ENCODE measurements at regions of chr20 and their contacts with region 1.

Region 1: DNA sequence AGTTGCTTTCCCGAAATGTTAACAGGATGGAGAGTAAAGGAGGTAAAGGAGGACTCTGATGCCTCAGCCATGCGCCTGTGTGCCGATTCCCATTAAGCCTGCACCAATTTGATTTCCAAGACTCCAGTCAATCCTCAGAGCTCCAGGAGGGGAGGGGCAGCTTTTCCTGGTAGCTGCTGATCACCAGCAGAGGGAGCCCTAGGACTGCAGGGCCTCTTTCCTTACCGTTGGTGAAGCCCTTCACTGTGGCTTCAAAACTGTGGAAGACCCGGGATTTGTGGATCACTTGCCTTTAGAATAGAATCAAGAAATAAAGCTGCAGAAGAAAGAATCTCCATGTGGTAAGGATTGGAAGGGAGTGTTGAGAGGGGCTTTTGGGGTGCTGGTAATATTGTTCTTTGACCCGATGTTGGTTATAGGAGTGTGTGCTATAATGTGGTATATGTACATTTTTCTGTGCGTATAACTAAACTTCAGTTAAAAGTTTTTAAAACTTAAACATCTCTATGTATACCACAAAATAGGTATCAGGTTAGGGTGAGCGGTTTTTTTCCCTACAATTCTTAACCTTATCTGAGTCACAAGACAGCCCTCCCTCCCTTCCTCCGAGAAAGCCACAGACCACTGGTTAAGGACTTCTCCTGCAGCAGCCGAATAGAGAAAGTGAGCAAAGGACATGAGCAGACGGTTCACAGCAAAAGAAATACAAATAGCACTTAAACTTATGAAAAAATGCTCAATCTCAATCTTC is 6.9 kb upstream of the OSER1 start:
- DNase-seq: peak; percentile 77
- ATAC-seq: peak; percentile 55
- H3K4me3 Mint-ChIP-seq: peak overlapping the region; percentile 50
- H3K27ac Mint-ChIP-seq: peak overlapping the region; percentile 75
- H3K4me1 Mint-ChIP-seq: peaks cover 51% of the 10 kb centered on the region
- H3K27me3 Mint-ChIP-seq: no peaks in the 10 kb centered on the region
- CTCF ChIP-seq: peak; percentile 95

Region 2: DNA sequence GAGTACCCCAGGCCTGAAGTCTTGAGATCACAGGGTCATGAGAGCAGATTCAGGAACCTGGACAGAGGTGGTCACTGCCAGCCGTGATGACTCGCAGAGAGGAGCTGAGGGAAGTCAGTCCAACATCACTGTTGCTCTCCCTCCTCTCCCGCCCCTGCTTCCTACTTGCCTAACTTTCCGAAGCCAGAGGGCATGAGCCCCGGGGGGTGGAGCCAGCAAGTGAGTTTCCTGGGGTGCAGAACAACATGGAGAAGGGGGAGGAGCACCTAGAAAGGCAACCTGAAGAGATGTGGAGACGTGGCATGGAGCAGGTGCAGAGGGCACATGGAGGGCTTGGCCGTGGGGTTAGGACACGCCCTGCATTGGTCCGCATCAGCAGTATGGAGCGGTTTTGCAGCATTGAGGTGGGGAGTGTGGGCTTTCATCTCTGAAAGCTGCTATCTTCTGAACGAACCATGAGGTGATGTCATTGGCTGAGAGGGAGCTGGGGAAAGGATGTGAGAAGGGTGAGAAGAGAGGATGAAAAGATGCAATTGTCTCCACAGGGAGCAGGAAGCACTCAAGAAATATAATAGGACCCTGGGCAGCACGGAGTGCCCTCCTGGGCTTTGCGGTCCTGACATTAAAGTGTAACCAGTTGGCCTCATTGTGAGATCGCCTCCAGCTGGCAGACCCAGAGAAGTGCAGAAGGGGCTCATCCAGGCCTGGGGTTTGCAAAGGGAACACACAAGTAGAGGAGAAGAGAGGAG is 54.6 kb after region 1 on chr20:
- CTCF ChIA-PET with region 1: interaction called, 12 read pairs
- POLR2A ChIA-PET with region 1: no interaction called
- intact Hi-C with region 1: no loop called
- DNase-seq: peak; percentile 7
- ATAC-seq: no peak
- H3K4me3 Mint-ChIP-seq: no peak overlapping the region
- H3K27ac Mint-ChIP-seq: no peak overlapping the region
- H3K4me1 Mint-ChIP-seq: no peaks in the 10 kb centered on the region
- H3K27me3 Mint-ChIP-seq: no peaks in the 10 kb centered on the region
- CTCF ChIP-seq: peak; percentile 41

Region 3: DNA sequence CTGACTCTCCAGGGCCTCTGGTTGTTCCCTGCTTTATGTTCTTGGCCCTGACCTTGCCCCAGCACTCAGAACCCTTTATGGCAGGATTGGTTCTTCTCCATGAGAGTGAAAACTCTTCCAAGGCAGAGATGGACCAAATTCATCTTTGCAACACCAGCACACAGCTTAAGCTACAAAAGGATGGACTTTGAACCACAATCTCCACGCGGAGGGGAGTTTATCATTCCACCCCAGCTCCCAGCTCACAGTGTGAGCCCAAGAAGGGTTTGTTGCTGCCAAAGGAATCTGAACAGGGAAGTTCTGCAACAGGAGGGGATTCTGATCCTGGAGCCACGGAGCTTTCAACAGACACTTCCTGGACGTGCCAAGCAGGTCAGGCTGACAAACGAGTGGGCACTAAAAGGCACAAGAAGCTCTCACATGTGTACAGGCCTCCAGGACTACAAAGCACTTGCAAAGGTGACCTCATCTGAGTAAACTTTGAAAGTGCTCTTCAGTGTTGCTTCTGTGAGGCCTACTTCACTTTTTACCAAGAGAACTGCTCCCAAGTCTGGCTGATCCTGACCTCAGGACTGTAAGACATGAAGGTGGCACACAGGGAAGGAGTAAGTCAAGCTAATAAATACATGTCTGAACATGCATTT is 84.6 kb after region 1 on chr20:
- CTCF ChIA-PET with region 1: interaction called, 13 read pairs
- POLR2A ChIA-PET with region 1: no interaction called
- intact Hi-C with region 1: no loop called
- DNase-seq: no peak
- ATAC-seq: no peak
- H3K4me3 Mint-ChIP-seq: no peak overlapping the region
- H3K27ac Mint-ChIP-seq: no peak overlapping the region
- H3K4me1 Mint-ChIP-seq: peaks cover 11% of the 10 kb centered on the region
- H3K27me3 Mint-ChIP-seq: no peaks in the 10 kb centered on the region
- CTCF ChIP-seq: no peak

Region 4: GRCh38 chr20:44319756-44320422 is 102.4 kb after region 1 on chr20:
- CTCF ChIA-PET with region 1: interaction called, 444 read pairs
- POLR2A ChIA-PET with region 1: no interaction called
- intact Hi-C with region 1: no loop called
- DNase-seq: no peak
- ATAC-seq: no peak
- H3K4me3 Mint-ChIP-seq: no peak overlapping the region
- H3K27ac Mint-ChIP-seq: no peak overlapping the region
- H3K4me1 Mint-ChIP-seq: no peaks in the 10 kb centered on the region
- H3K27me3 Mint-ChIP-seq: no peaks in the 10 kb centered on the region
- CTCF ChIP-seq: no peak

Region 5: GRCh38 chr20:44609511-44610312 is 392.2 kb after region 1 on chr20:
- CTCF ChIA-PET with region 1: interaction called, 22 read pairs
- POLR2A ChIA-PET with region 1: no interaction called
- intact Hi-C with region 1: loop called (anchors 5 kb)
- DNase-seq: peak; percentile 91
- ATAC-seq: peak; percentile 99
- H3K4me3 Mint-ChIP-seq: peak overlapping the region; percentile 39
- H3K27ac Mint-ChIP-seq: peak overlapping the region; percentile 86
- H3K4me1 Mint-ChIP-seq: peaks cover 33% of the 10 kb centered on the region
- H3K27me3 Mint-ChIP-seq: no peaks in the 10 kb centered on the region
- CTCF ChIP-seq: peak; percentile 94

Measured in activated CD8-positive, alpha-beta T cell treated with anti-CD3 and anti-CD28 coated beads for 36 hours (primary cell).